ENCODE measurements at regions of chr7 and their contacts with region 1.

Region 1: DNA sequence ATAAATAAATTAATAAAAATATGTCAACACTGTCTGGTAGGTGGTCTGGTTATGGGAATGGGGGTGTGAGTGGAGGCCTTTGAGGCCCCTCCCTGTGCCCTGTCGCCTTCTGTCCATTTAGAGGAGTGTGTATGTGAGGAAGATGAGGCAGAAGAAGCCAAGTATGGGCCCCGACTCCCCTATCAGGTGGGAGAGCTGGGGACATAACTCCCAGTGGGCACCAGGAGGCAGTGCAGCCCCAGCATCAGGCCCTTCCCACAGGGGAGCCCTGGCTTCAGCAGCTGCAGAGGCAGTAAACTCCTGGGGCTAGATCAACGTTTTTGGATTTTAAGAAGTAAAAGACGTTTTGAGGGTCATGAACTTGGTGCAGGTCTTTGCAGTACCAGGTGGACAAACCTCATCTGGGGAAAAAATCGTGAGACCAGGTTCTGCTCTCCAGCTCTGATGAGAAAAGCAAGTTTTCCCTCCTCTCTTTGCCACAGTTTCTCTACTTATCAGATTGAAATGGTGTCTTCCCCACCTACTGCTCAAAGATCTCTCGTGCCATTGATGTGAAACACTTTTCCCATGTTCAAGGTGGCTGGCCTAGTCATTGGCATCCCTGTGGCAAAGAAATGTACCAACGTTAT is 167.8 kb upstream of the EEPD1 start:
- DNase-seq: peak; percentile 94

Region 2: GRCh38 chr7:36021917-36022550 is 36.8 kb after region 1 on chr7:
- intact Hi-C with region 1: loop called in 1 of 2 experiments (anchors 1 kb)
- DNase-seq: no peak

Region 3: GRCh38 chr7:36057323-36057722 is 72.1 kb after region 1 on chr7:
- intact Hi-C with region 1: no loop called
- DNase-seq: no peak

Region 4: DNA sequence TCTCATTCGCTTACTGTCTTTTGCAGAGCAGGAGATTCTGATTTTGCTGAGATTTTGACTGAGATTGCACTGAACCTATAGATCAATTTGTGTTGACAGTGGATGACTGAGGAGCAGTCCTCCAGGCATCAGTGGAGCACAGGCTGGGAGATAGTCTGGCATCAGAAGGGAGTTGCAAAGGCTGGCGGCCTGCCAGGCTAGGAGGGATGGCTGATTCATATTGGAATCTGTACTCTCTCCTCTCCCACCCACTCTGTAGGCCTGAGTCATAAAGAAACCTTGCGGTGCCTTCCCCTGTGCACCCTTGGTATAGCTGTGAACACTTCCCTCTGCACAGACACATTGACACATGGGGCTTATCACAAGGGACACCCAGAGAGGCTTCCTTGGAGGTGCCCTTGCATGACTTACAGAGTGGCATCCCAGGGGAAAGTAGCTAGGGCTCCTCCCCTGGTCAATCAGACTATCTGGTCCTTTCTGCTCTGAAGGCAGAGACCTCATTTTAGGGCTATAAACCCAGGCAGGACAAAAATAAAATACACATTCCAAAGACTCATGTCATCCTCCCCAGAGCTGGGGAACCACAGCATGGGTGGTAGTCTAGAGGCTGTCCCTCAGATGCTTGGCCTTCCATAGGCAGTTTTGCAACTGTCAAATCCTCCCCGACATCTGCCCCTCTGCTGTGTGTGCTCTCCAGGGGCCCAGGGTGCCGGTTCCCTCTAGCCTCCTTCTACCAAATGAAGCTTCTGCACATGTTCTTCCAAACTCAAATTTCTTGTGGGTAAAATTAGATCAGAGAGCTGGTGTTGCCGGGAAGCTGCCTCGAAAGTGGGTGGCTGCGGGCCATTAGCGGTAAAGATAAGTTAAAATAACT is 130.4 kb after region 1 on chr7:
- intact Hi-C with region 1: loop called in 1 of 2 experiments (anchors 10 kb)
- DNase-seq: peak; percentile 94

Region 5: DNA sequence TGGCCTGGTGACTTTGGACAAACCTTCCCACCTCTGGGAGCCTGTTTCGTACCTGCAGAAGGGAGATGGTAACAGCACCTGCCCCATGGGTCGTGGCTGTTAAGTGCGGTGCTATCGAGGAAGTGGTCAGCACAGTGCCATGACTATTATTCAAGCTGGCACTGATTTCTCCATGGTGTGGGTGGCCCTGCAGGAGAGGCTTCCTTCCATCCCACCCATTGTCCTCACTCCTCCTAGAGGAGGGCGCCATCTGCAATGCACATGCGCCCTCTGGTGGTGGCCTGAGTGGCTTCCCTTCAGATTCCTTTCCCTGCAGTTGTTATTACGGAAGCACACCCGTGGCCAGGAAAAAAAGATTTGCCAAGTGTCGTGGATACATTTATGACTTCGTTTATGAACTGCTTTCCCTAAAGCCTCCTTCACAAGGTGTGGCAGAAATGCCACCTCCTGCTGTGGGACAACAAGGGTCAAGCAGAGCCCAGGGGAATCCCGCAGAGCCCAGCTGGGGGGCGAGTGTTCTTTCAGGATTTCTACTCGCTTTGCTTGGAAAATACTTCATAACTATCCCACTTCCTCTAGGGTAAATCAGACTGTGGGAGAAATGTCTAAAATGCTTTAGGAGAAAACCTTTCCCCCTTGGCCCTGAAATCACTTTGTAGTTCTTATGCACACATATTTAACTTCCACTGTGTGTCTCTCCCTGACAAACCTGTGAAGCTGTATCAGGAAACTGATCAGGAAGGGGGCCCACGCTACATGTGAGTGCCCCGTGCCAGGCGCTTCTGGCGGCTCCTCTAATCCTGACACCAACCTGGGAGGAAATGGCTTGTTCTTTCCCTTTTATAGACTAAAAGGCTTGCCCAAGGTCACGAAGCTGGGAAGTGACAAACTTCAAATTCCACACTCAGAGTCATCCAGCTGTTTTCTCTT is 306.4 kb after region 1 on chr7:
- intact Hi-C with region 1: loop called (anchors 2 kb)
- DNase-seq: peak; percentile 95

Region 6: DNA sequence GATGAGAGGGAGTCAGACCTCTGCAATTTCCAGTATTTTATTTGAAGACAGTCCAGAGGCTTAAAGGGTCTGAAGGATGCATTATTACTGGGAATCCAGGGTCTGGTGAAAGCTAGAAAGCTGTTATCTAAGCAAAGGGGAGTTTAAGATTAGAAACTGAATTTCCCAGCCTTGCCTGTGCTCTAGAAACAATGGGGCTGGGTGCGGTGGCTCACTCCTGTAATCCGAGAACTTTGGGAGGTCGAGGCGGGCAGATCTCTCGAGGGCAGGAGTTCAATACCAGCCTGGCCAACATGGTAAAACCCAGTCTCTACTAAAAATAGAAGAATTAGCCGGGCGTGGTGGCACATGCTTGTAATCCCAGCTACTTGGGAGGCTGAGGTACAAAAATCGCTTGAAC is 332.9 kb after region 1 on chr7:
- intact Hi-C with region 1: loop called in 1 of 2 experiments (anchors 2 kb)
- DNase-seq: no peak

Region 7: DNA sequence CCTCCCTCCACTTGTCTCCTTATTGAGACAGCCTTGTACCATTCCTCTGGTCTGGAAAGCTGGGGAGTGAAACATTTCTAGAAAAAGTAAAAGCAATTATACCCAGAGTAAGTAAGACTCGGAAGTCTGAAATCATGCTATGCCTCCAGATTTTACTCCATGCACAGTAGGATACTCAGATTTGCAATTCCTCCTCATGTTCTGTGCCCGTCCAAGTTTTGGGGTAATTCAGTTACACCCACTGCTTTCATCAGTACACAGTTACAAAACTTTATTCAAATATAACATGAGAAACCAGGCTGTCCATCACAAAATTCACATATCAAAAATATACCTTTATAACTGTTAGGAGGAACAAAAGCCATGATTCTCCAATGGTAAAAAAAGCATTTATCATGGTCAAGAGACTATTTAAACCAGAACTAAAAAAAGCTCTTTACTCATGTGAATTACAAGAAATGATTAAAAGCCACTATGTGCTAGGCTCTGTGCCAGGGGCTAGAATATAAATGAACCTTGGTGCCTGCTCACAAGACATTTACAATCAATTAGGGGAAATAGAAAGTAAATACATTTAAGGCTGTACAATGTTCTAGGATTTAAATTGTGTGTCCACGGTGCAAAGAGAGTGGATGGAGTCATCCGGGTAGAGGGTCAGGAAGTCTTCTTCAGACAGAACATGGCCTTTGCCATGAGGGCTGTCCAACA is 1143.2 kb after region 1 on chr7:
- intact Hi-C with region 1: no loop called
- DNase-seq: no peak

Region 8: GRCh38 chr7:37815671-37816371 is 1830.6 kb after region 1 on chr7:
- intact Hi-C with region 1: no loop called
- DNase-seq: no peak

Measured in posterior vena cava (tissue), 2 donors.